IMR-90 (cell line): ENCODE measurements at regions of chr12 and their contacts with region 1.

Region 1: DNA sequence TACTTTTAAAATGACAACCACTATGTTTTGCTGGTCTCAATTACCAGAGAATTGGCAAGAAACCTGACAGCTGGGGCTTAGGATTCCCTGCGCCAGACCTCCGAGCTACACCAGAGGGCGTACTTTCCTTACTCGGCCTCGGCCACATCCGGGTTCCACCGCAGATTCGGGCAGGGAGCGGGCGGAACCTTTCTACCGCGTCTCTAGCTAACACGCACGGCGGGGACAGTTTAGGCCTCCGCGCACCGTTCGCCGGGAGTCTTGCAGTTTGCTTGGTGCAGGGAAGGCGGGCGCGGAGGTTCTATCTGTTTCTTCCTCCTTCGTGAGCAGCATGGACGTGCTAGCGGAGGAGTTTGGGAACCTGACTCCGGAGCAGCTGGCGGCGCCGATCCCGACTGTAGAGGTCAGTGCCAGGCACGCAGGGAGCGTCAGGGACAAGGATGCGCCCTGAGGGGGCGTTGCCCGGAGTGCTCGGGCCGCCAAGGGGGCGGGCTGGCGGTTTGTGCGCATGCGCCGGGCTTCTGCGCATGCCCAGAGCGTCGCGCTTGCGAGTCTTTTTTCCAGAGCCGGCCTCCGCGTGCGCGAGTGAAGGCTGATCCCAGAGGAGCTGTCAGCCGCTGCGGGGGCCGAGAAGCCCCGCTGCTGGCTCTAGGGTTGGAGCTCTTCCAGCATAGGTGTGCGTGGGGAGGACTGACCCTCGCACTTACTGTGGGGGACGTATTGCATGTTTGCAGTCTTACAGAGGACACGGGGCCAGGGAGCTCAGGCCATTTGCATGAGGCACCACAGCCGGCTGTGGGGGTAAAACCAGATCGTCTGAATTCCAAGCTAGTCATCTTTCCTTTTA is at the start of gene POLR3B:
- DNase-seq: peak; percentile 96
- ATAC-seq: peak; percentile 90
- H3K4me3 ChIP-seq: peak within 1 kb of the TSS; percentile 71
- H3K27ac ChIP-seq: peak within 1 kb of the TSS; percentile 91
- H3K4me1 ChIP-seq: peaks cover 3% of the 10 kb centered on the region; the same call in 1 of the 2 replicates
- H3K27me3 ChIP-seq: no peaks in the 10 kb centered on the region
- CTCF ChIP-seq: peak; percentile 94
- POLR2A ChIP-seq: peak; percentile 59
- RAD21 ChIP-seq: peak; percentile 73
- total RNA-seq, gene POLR3B: 15.4 and 20.0 TPM in 2 replicates

Region 2: GRCh38 chr12:105420659-105421240 is 937.0 kb before region 1 on chr12:
- CTCF ChIA-PET with region 1: no interaction called
- POLR2A ChIA-PET with region 1: no interaction called
- dilution Hi-C with region 1: no loop called
- in situ Hi-C with region 1: loop called (anchors 25 kb)
- intact Hi-C with region 1: loop called (anchors 10 kb)
- DNase-seq: peak; percentile 77
- ATAC-seq: peak; percentile 64
- H3K4me3 ChIP-seq: no peak overlapping the region
- H3K27ac ChIP-seq: no peak overlapping the region
- H3K4me1 ChIP-seq: peaks cover 13% of the 10 kb centered on the region
- H3K27me3 ChIP-seq: no peaks in the 10 kb centered on the region
- CTCF ChIP-seq: peak; percentile 97
- POLR2A ChIP-seq: peak; percentile 69
- RAD21 ChIP-seq: peak; percentile 100

Region 3: DNA sequence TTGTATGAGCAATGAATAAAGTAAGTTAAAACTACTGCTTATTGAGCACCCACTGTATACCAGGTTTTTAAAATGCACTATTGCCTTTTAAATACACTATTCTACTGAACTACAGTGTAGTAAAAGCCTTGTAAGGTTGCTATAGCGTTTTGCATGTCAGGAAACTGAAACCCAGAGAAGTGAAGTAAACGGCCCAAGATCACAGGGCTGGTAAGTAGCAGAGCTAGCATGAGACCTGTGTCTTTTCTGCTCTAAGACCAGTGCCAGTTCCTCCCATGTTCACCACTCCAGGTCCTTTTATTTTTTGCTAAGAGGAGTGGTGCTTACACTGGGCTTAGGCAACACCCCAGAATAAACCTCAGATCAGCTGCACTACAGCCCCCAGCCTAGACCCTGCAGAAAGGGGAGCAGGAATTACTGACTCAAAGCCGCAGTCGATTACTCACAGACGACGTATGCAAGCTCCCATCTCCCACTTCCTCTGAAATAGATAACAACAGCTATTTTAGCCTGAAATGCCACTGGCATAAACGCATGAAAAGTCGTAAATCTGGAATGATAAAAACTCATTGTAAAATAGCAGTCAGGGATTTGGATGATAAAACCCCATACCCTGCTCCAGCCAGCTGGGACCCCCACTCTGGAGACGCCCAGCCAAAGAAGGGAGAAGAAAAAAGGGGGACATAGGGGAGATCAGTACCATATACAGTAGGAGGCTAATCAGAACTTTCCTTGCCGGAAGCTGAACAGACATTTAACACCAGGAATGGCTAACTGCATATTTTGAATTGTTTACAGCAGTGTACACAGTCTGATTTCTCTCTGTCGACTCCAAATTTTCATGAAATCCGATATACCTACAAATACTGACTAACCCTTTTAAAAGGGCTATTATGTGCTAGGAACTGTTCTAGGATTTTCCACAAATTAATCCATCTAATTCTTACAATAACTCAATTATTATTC is 327.3 kb before region 1 on chr12:
- CTCF ChIA-PET with region 1: no interaction called
- POLR2A ChIA-PET with region 1: no interaction called
- dilution Hi-C with region 1: no loop called
- in situ Hi-C with region 1: no loop called
- intact Hi-C with region 1: no loop called
- DNase-seq: peak; percentile 96
- ATAC-seq: peak; percentile 86
- H3K4me3 ChIP-seq: peak overlapping the region; percentile 13; the same call in 1 of the 2 replicates
- H3K27ac ChIP-seq: peak overlapping the region; percentile 95
- H3K4me1 ChIP-seq: peaks cover 18% of the 10 kb centered on the region
- H3K27me3 ChIP-seq: no peaks in the 10 kb centered on the region
- CTCF ChIP-seq: no peak
- POLR2A ChIP-seq: peak; percentile 46; the same call in 1 of the 2 replicates
- RAD21 ChIP-seq: peak; percentile 10; the same call in 1 of the 2 replicates

Region 4: GRCh38 chr12:106247674-106248311 is 110.0 kb before region 1 on chr12 and contains the start of gene CKAP4:
- CTCF ChIA-PET with region 1: no interaction called
- POLR2A ChIA-PET with region 1: no interaction called
- dilution Hi-C with region 1: no loop called
- in situ Hi-C with region 1: no loop called
- intact Hi-C with region 1: loop called (anchors 2 kb)
- DNase-seq: peak; percentile 82
- ATAC-seq: peak; percentile 73
- H3K4me3 ChIP-seq: peak within 1 kb of the TSS; percentile 78
- H3K27ac ChIP-seq: peak within 1 kb of the TSS; percentile 97
- H3K4me1 ChIP-seq: peaks cover 17% of the 10 kb centered on the region
- H3K27me3 ChIP-seq: no peaks in the 10 kb centered on the region
- CTCF ChIP-seq: no peak
- POLR2A ChIP-seq: no peak; the same call in none of the 2 replicates
- RAD21 ChIP-seq: no peak
- total RNA-seq, gene CKAP4: 94.5 and 113 TPM in 2 replicates

Region 5: DNA sequence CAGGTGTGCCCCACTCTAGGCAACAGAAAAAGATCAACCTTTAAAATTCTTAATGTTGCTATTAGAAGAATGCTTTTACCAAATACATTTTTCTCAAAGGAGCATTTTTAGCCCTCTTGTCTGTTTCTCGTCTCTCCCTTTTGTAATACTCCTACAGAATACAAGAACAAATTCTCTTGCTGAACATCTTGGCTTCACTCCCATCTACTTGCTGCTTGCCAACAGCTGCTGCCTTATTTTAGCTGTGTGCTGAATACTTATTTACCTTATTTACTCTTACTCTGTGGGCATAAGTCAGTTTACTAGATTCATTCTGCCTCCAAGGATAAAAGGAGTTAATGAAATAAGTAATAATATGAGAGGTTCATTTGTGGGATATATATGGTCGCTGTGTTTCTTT is 70.6 kb after region 1 on chr12:
- CTCF ChIA-PET with region 1: no interaction called
- POLR2A ChIA-PET with region 1: no interaction called
- dilution Hi-C with region 1: no loop called
- in situ Hi-C with region 1: no loop called
- intact Hi-C with region 1: no loop called
- DNase-seq: peak; percentile 52
- ATAC-seq: peak; percentile 57
- H3K4me3 ChIP-seq: no peak overlapping the region
- H3K27ac ChIP-seq: no peak overlapping the region
- H3K4me1 ChIP-seq: no peaks in the 10 kb centered on the region
- H3K27me3 ChIP-seq: no peaks in the 10 kb centered on the region
- CTCF ChIP-seq: no peak
- POLR2A ChIP-seq: no peak
- RAD21 ChIP-seq: no peak

Region 6: DNA sequence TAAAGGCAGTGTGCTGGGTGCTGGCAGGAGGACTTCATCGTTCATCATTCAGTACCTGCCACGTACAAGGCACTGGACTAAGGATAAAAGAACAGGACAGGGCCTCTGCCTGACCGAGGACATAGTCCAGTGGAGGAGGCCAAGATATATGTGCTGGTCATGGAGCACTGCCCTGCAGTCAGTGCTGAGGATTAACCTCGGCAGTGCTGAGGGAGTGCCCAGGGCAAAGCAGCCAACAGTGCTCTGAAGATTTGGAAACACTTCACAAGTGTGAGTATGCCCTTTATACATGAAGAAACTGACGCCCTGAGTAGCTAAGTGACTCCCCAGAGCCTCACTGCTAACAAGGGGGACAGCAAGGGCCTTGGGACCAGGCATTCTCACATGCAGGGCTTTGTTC is 153.6 kb after region 1 on chr12:
- CTCF ChIA-PET with region 1: no interaction called
- POLR2A ChIA-PET with region 1: no interaction called
- dilution Hi-C with region 1: no loop called
- in situ Hi-C with region 1: no loop called
- intact Hi-C with region 1: no loop called
- DNase-seq: no peak
- ATAC-seq: no peak
- H3K4me3 ChIP-seq: no peak overlapping the region
- H3K27ac ChIP-seq: no peak overlapping the region
- H3K4me1 ChIP-seq: no peaks in the 10 kb centered on the region
- H3K27me3 ChIP-seq: no peaks in the 10 kb centered on the region
- CTCF ChIP-seq: no peak
- POLR2A ChIP-seq: no peak
- RAD21 ChIP-seq: no peak

Region 7: DNA sequence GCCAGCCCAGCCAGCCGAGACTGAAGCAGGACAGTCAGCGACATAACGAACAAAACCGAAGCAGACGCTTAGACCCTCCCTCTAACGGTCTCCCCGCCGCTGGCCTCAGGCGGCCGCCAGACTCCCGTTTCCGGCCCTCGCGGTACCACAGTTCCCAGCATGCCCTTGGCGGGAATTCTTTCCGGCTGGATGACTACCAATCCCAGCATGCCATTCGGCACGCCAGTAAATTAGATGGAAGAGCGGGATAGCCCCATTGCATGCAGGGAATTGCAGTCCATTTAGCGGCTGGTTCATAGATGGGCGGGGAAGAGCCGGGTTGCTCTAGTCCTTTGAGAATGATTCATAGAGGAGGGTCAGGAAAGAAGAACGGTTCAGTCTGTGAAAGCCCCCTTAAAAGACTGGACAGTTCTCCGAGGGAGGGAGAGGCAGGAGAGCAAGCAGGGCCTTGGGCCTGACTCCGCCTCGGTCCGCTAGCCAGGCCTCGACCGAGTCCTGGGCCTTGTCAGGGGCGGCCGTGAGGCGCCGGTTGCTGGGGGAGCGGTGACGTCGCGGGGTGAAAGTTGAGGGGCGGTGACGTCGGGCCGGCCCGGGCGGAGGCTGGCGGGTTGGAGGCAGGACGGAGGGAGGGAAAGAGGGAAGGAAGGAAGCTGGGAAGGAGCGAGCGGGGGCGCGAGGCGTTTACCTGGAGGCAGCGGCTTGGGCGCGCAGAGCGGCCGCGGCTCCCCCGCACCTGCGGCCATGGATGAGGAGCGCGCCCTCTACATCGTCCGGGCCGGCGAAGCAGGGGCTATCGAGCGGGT is 416.4 kb after region 1 on chr12 and contains the start of gene RIC8B:
- CTCF ChIA-PET with region 1: no interaction called
- POLR2A ChIA-PET with region 1: no interaction called
- dilution Hi-C with region 1: no loop called
- in situ Hi-C with region 1: no loop called
- intact Hi-C with region 1: loop called (anchors 10 kb)
- DNase-seq: peak; percentile 99
- ATAC-seq: peak; percentile 97
- H3K4me3 ChIP-seq: peak within 1 kb of the TSS; percentile 76
- H3K27ac ChIP-seq: peak within 1 kb of the TSS; percentile 98
- H3K4me1 ChIP-seq: no peaks in the 10 kb centered on the region; the same call in 1 of the 2 replicates
- H3K27me3 ChIP-seq: no peaks in the 10 kb centered on the region
- CTCF ChIP-seq: no peak
- POLR2A ChIP-seq: peak; percentile 94
- RAD21 ChIP-seq: no peak
- total RNA-seq, gene RIC8B: 16.7 and 19.5 TPM in 2 replicates

Region 8: GRCh38 chr12:106841510-106842302 is 483.9 kb after region 1 on chr12:
- CTCF ChIA-PET with region 1: interaction called, 4 read pairs
- POLR2A ChIA-PET with region 1: no interaction called
- dilution Hi-C with region 1: no loop called
- in situ Hi-C with region 1: no loop called
- intact Hi-C with region 1: loop called (anchors 10 kb)
- DNase-seq: peak; percentile 45
- ATAC-seq: peak; percentile 65
- H3K4me3 ChIP-seq: no peak overlapping the region
- H3K27ac ChIP-seq: no peak overlapping the region
- H3K4me1 ChIP-seq: peaks cover 5% of the 10 kb centered on the region
- H3K27me3 ChIP-seq: no peaks in the 10 kb centered on the region
- CTCF ChIP-seq: peak; percentile 65
- POLR2A ChIP-seq: no peak
- RAD21 ChIP-seq: peak; percentile 72

Region 9: DNA sequence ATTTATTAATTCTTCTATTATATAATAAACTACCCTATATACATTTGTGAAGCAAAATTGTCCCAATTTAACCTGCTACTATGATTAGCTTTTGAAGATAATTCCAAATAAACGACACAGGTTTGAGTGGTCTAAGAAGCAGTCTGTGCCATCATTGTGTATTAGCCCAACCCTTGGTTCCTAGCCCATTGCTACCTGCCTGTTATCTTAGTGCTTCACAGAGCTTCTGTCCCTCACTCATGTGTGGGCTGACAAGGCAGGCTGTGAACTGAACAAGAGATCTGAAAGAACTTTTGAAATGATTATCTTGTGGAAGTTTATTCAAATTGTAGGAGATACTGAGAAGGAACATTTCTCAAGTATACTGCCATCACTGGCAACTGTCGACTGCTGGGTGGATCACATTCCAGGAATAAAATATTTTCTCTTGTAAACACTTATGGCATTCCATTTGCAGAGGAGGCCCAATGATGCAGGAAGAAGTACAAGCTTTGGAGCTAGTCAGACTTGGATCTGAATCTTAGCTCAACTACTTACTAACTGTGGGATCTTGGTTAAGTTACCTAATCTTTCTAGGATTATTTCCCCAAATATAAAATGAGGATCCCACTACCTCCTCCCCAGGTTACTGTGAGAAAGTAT is 636.9 kb after region 1 on chr12:
- CTCF ChIA-PET with region 1: no interaction called
- POLR2A ChIA-PET with region 1: no interaction called
- dilution Hi-C with region 1: no loop called
- in situ Hi-C with region 1: no loop called
- intact Hi-C with region 1: no loop called
- DNase-seq: peak; percentile 74
- ATAC-seq: peak; percentile 99
- H3K4me3 ChIP-seq: no peak overlapping the region
- H3K27ac ChIP-seq: peak overlapping the region; percentile 73; the same call in 1 of the 2 replicates
- H3K4me1 ChIP-seq: peaks cover 4% of the 10 kb centered on the region
- H3K27me3 ChIP-seq: no peaks in the 10 kb centered on the region
- CTCF ChIP-seq: no peak
- POLR2A ChIP-seq: no peak
- RAD21 ChIP-seq: no peak

Region 10: GRCh38 chr12:107093417-107094182 is 735.8 kb after region 1 on chr12 and contains the start of gene CRY1:
- CTCF ChIA-PET with region 1: no interaction called
- POLR2A ChIA-PET with region 1: no interaction called
- dilution Hi-C with region 1: no loop called
- in situ Hi-C with region 1: no loop called
- intact Hi-C with region 1: loop called (anchors 1 kb)
- DNase-seq: peak; percentile 94
- ATAC-seq: peak; percentile 84
- H3K4me3 ChIP-seq: peak within 1 kb of the TSS; percentile 74
- H3K27ac ChIP-seq: peak within 1 kb of the TSS; percentile 87
- H3K4me1 ChIP-seq: no peaks in the 10 kb centered on the region; the same call in 1 of the 2 replicates
- H3K27me3 ChIP-seq: no peaks in the 10 kb centered on the region
- CTCF ChIP-seq: no peak
- POLR2A ChIP-seq: peak; percentile 97
- RAD21 ChIP-seq: no peak
- total RNA-seq, gene CRY1: 5.9 and 9.7 TPM in 2 replicates